CD4-positive, alpha-beta memory T cell (primary cell): ENCODE measurements at regions of chr13 and their contacts with region 1.

Region 1: GRCh38 chr13:33873251-33873908 is 55.4 kb downstream of the RFC3 start:
- DNase-seq: no peak
- H3K4me3 ChIP-seq: no peak overlapping the region
- H3K4me3 Mint-ChIP-seq: no peak overlapping the region
- H3K27ac ChIP-seq: no peak overlapping the region
- H3K27ac Mint-ChIP-seq: no peak overlapping the region
- H3K4me1 ChIP-seq: no peaks in the 10 kb centered on the region
- H3K4me1 Mint-ChIP-seq: peaks cover 0 to 2% (median 0%) of the 10 kb centered on the region in 4 donors
- H3K27me3 ChIP-seq: no peaks in the 10 kb centered on the region
- H3K27me3 Mint-ChIP-seq: no peaks in the 10 kb centered on the region

Region 2: GRCh38 chr13:33845572-33846443 is 27.6 kb before region 1 on chr13:
- CTCF ChIA-PET with region 1: no interaction called
- POLR2A ChIA-PET with region 1: no interaction called
- intact Hi-C with region 1: loop called (anchors 1 kb)
- DNase-seq: no peak
- H3K4me3 ChIP-seq: no peak overlapping the region
- H3K4me3 Mint-ChIP-seq: no peak overlapping the region
- H3K27ac ChIP-seq: no peak overlapping the region
- H3K27ac Mint-ChIP-seq: no peak overlapping the region
- H3K4me1 ChIP-seq: no peaks in the 10 kb centered on the region
- H3K4me1 Mint-ChIP-seq: no peaks in the 10 kb centered on the region
- H3K27me3 ChIP-seq: no peaks in the 10 kb centered on the region
- H3K27me3 Mint-ChIP-seq: no peaks in the 10 kb centered on the region